ENCODE measurements at regions of chr1 and their contacts with region 1.

Region 1: GRCh38 chr1:218330043-218330623 is 15.0 kb upstream of the TGFB2 start:
- H3K4me3 Mint-ChIP-seq: no peak overlapping the region
- H3K27ac Mint-ChIP-seq: no peak overlapping the region
- H3K4me1 Mint-ChIP-seq: no peaks in the 10 kb centered on the region
- H3K27me3 Mint-ChIP-seq: no peaks in the 10 kb centered on the region

Region 2: GRCh38 chr1:218521375-218522169 is 191.4 kb after region 1 on chr1:
- intact Hi-C with region 1: loop called (anchors 2 kb)
- H3K4me3 Mint-ChIP-seq: no peak overlapping the region
- H3K27ac Mint-ChIP-seq: peak overlapping the region; percentile 51
- H3K4me1 Mint-ChIP-seq: peaks cover 25% of the 10 kb centered on the region
- H3K27me3 Mint-ChIP-seq: peaks cover 26% of the 10 kb centered on the region

Region 3: DNA sequence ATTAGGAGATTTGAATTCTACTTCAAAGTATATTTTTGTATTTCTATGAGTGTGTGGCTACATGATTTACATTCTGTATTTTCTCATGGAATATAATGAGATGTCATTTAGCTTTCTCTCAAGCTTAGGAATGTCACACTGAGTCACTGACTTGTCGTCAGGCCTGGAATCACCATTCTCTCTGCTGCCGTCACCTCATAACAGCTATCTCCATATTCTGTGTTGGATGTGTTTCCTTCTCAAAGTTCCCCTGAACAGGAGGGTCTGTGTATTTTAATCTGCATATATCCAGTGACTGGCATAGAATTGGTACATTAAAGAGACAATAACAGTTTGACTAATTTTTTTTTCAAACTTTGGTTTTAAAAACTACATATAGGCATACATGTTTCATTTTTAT is 879.4 kb after region 1 on chr1:
- intact Hi-C with region 1: loop called (anchors 10 kb)
- H3K4me3 Mint-ChIP-seq: no peak overlapping the region
- H3K27ac Mint-ChIP-seq: no peak overlapping the region
- H3K4me1 Mint-ChIP-seq: peaks cover 6% of the 10 kb centered on the region
- H3K27me3 Mint-ChIP-seq: no peaks in the 10 kb centered on the region

Region 4: GRCh38 chr1:219416594-219417238 is 1086.6 kb after region 1 on chr1:
- intact Hi-C with region 1: loop called (anchors 5 kb)
- H3K4me3 Mint-ChIP-seq: no peak overlapping the region
- H3K27ac Mint-ChIP-seq: no peak overlapping the region
- H3K4me1 Mint-ChIP-seq: peaks cover 10% of the 10 kb centered on the region
- H3K27me3 Mint-ChIP-seq: peaks cover 12% of the 10 kb centered on the region

Region 5: DNA sequence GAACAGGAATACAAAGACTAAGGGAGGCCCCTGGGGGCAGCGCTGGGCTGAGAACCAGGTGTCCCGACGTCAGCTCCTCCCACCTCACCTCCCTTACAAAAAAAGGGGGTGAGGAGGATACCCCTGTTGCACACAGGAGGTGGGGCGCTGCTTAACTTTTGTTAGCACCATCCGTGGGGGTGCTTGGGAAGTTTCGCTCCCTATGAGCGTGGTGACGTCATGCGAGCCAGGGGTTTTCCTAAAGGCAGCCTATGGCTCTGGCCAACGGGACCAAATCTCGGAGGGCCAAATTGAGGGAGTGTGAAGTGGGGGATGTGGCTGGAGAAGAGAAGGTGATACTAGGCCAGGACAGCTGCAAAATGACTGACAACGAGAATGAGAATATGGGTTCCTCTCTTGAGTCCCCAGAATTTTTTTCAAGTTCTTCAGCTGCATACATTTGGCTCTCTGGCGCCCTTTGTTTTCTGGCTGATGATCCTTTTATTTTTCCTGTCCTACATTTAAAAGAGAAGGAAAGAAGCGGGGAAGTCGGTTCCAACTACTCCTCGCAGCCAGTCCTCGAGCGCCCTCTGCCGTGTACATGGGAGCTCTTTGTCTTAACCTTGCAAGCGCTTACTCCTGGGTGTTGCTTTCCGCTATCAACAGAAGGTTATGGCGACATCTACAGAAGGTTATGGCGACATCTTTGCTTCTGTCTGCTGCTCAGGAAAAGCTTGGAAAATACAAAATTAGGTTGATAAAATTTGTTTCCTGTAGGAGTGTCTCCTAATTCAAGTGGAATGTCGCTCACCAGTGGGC is 1330.7 kb after region 1 on chr1:
- intact Hi-C with region 1: loop called (anchors 5 kb)
- H3K4me3 Mint-ChIP-seq: peak overlapping the region; percentile 66
- H3K27ac Mint-ChIP-seq: no peak overlapping the region
- H3K4me1 Mint-ChIP-seq: peaks cover 13% of the 10 kb centered on the region
- H3K27me3 Mint-ChIP-seq: peaks cover 2% of the 10 kb centered on the region

Region 6: DNA sequence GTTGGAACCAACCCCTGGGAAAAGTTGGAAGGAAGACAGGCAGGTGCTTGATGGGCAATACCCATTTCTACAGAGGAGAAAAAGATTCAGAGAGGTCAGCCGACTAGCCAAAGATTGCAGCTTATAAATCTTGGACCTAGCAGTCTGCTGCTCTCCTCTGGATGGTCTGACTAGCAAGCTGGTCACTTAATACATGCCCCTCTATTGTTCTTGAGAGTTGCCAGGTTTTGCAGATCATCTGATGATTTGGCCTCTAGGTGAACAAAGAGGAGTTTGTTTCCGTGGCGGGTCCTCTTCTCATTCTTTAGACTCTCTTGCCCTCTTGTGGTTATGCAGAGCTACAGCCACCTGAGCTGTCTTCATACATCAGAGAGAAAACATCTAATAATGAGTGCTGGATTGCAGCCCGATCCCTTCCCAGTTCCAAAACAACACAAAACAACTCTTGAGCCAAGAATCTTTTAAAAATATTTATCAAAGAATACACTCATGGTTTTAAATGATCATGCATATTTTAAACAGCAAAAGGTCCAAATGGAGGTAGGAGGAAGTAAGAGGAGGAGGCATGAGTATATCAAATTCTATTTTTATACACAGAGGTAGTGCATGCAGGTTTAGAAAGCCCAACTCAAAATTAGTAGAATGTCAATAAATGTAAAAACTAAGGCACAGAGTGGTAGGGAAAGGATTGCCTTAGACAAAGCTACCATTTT is 1482.5 kb after region 1 on chr1:
- intact Hi-C with region 1: loop called (anchors 10 kb)
- H3K4me3 Mint-ChIP-seq: no peak overlapping the region
- H3K27ac Mint-ChIP-seq: no peak overlapping the region
- H3K4me1 Mint-ChIP-seq: no peaks in the 10 kb centered on the region
- H3K27me3 Mint-ChIP-seq: peaks cover 13% of the 10 kb centered on the region

Measured in dendritic cell treated with granulocyte-macrophage colony-stimulating factor and Interleukin-4, amounts not matched to agents 40 ng/mL and 50 ng/mL, for 4 days (primary cell).